HCT116 (cell line): ENCODE measurements at regions of chr7 and their contacts with region 1.

Region 1: GRCh38 chr7:135662373-135663114 is at the start of gene STMP1:
- DNase-seq: peak; percentile 85
- ATAC-seq: peak; percentile 87
- H3K4me3 ChIP-seq: peak within 1 kb of the TSS; percentile 90 to 95
- H3K27ac ChIP-seq: peak within 1 kb of the TSS; percentile 71
- H3K4me1 ChIP-seq: peaks cover 3 to 22% of the 10 kb centered on the region in 2 experiments; a peak in 1 of 4 replicates
- H3K27me3 ChIP-seq: no peaks in the 10 kb centered on the region
- CTCF ChIP-seq: peak in 2 of 3 experiments; percentile 49 to 52; a peak in 4 of 6 replicates
- POLR2A ChIP-seq: peak; percentile 89
- RAD21 ChIP-seq: peak; percentile 69
- total RNA-seq, gene STMP1: 32.8 TPM

Region 2: GRCh38 chr7:133714654-133715053 is 1947.9 kb before region 1 on chr7:
- CTCF ChIA-PET with region 1: no interaction called
- POLR2A ChIA-PET with region 1: no interaction called
- RAD21 ChIA-PET with region 1: no interaction called
- intact Hi-C with region 1: loop called (anchors 5 kb)
- DNase-seq: no peak
- ATAC-seq: no peak
- H3K4me3 ChIP-seq: no peak overlapping the region
- H3K27ac ChIP-seq: no peak overlapping the region
- H3K4me1 ChIP-seq: no peaks in the 10 kb centered on the region
- H3K27me3 ChIP-seq: no peaks in the 10 kb centered on the region
- CTCF ChIP-seq: no peak
- POLR2A ChIP-seq: no peak
- RAD21 ChIP-seq: no peak

Region 3: GRCh38 chr7:135745703-135746312 is 83.3 kb after region 1 on chr7:
- CTCF ChIA-PET with region 1: no interaction called
- POLR2A ChIA-PET with region 1: interaction called, 11 read pairs
- RAD21 ChIA-PET with region 1: no interaction called
- intact Hi-C with region 1: loop called (anchors 2 kb)
- DNase-seq: peak; percentile 93
- ATAC-seq: peak; percentile 74
- H3K4me3 ChIP-seq: peak overlapping the region; percentile 30 to 45
- H3K27ac ChIP-seq: peak overlapping the region; percentile 62
- H3K4me1 ChIP-seq: peaks cover 25 to 49% of the 10 kb centered on the region in 2 experiments
- H3K27me3 ChIP-seq: no peaks in the 10 kb centered on the region
- CTCF ChIP-seq: no peak
- POLR2A ChIP-seq: no peak
- RAD21 ChIP-seq: no peak

Region 4: DNA sequence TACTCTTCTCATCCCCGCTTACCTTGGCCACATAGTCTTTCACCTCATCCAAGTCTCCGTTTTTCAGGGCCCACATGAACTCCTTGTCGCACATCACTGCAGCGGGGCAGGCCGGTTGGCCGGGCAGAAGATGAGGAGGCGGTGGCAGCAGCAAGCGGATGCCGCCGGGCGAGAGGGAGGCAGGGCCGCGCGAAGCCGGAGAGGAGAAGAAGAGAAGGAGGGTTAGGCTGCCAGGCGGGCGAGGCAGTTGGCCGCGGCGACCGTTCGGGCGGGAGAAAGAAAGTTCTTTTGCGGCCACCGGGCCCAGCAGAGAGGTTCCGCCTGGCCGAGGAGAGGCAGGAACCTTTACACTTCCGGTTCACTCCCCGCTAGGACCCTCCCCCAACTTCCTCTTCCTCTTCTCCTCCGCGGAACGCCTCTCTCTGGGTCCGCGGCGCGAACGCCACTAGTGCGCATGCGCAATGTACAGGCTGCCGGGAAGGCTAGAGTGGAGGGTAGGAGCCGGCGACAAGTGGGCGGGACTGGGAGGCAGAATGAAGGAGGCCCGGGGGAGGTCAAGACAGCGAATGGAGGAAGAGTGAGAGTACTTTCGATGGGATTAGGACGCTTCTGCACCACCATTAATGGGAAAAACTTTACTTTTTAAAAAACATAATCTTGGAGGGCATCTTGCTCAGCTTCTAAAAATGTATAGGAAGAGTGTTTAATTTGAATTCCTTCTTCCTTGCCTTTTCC is 314.6 kb after region 1 on chr7 and contains the start of gene MTPN:
- CTCF ChIA-PET with region 1: no interaction called
- POLR2A ChIA-PET with region 1: no interaction called
- RAD21 ChIA-PET with region 1: no interaction called
- intact Hi-C with region 1: loop called (anchors 2 kb)
- DNase-seq: peak; percentile 94
- ATAC-seq: peak; percentile 98
- H3K4me3 ChIP-seq: peak within 1 kb of the TSS; percentile 94 to 97
- H3K27ac ChIP-seq: peak within 1 kb of the TSS; percentile 72
- H3K4me1 ChIP-seq: peaks cover 5 to 14% of the 10 kb centered on the region in 2 experiments; a peak in 3 of 4 replicates
- H3K27me3 ChIP-seq: no peaks in the 10 kb centered on the region
- CTCF ChIP-seq: no peak
- POLR2A ChIP-seq: peak; percentile 41
- RAD21 ChIP-seq: no peak
- total RNA-seq, gene MTPN: 152 TPM